ENCODE measurements at regions of chr3 and their contacts with region 1.

Region 1: DNA sequence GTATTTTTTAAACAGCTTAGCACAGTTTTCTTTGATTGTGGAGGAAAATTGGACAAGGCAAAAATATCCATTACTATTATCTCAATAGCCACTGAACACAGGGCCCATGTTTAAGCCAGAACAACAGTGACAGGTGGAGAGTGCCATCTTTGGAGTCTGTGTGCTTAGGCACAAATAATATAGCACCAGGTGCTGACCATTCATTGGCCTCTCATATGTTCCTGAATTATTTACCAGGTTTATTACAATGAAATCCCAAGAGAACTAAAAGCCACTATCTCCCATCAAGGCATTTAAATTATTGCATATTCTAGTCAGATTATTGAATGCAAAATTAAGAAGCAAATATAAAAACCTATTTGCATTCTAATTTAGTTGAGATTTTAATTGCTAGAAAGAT is 39.6 kb downstream of the GPR156 start:
- DNase-seq: no peak
- ATAC-seq: no peak
- H3K4me3 ChIP-seq: no peak overlapping the region
- H3K27ac ChIP-seq: no peak overlapping the region
- H3K4me1 ChIP-seq: no peaks in the 10 kb centered on the region
- CTCF ChIP-seq: no peak
- EP300 ChIP-seq: no peak
- POLR2A ChIP-seq: no peak
- RAD21 ChIP-seq: no peak

Region 2: DNA sequence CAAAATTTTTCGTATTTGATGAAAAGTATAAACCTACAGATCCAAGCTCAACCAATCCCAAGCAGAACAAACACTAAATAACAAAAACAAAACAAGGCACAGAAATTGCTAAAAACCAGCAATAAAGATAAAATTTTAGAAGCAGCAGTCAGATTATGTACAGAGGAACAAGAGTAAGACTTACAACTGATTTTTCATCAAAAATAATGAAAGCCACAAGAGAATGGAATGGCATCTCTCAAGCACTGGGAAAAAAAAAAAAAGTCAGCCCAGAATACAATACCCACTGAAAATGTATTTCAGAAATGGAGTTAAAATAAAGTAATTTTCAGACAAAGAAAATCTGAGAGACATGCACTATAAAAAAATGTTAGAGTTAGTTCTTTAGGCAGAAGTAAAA is 12.6 kb after region 1 on chr3:
- CTCF ChIA-PET with region 1: interaction called, 15 read pairs
- POLR2A ChIA-PET with region 1: no interaction called
- DNase-seq: no peak
- ATAC-seq: no peak
- H3K4me3 ChIP-seq: no peak overlapping the region
- H3K27ac ChIP-seq: no peak overlapping the region
- H3K4me1 ChIP-seq: no peaks in the 10 kb centered on the region
- CTCF ChIP-seq: no peak
- EP300 ChIP-seq: no peak
- POLR2A ChIP-seq: no peak
- RAD21 ChIP-seq: no peak

Region 3: GRCh38 chr3:120311863-120312794 is 66.7 kb after region 1 on chr3:
- CTCF ChIA-PET with region 1: no interaction called
- POLR2A ChIA-PET with region 1: no interaction called
- DNase-seq: no peak
- ATAC-seq: no peak
- H3K4me3 ChIP-seq: no peak overlapping the region
- H3K27ac ChIP-seq: no peak overlapping the region
- H3K4me1 ChIP-seq: no peaks in the 10 kb centered on the region
- CTCF ChIP-seq: no peak
- EP300 ChIP-seq: no peak
- POLR2A ChIP-seq: no peak
- RAD21 ChIP-seq: no peak

Region 4: DNA sequence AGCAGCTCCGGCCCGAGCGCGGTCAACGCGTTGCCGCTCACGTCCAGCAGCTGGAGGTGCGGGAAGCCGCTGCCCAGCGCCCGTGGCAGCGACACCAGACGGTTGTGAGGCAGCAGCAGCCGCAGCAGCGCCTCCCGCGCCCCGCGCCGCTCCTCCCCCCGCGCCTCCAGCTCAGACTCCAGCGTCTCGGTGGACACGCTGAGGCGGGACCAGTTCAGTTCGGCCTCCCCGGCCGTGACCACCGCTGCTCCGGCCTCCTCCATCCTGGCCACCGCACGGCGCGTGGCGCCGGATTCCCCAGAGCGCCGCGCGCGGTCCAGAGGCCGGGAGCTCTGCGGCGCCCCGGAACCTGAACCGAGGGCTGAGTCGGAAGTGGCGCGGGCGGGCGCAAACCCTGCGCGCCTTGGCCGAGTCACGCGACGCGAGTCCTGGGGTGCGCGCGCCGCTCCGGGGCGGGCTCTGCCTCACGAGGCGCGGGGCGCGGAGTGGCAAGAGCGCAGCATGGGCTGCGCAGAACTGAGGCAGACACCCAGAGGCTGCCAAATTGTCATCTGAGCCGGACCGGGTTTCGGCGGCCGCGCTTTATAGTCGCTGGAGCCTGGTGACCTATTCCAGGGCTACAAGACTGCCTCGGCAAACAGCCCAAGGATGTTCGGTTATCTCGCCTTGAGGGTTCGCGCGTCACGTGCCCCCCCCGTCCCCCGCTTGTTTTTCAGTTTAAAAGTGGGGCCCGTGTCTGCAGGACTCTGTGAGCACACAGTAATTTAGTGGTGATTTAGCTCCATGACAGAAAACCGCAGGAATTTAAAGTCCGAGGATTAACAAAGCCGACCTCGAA is 103.8 kb after region 1 on chr3 and contains the start of gene LRRC58:
- CTCF ChIA-PET with region 1: interaction called, 10 read pairs
- POLR2A ChIA-PET with region 1: interaction called, 6 read pairs
- DNase-seq: peak; percentile 82 to 95
- ATAC-seq: peak; percentile 91 to 94
- H3K4me3 ChIP-seq: peak within 1 kb of the TSS; percentile 70
- H3K27ac ChIP-seq: peak within 1 kb of the TSS; percentile 91 to 95
- H3K4me1 ChIP-seq: peaks cover 41% of the 10 kb centered on the region
- CTCF ChIP-seq: peak; percentile 35; the same call in 2 of the 3 replicates
- EP300 ChIP-seq: peak in 1 of 2 experiments; percentile 33; a peak in 1 of 5 replicates
- POLR2A ChIP-seq: peak; percentile 80
- RAD21 ChIP-seq: 0 out of 5 replicates have a peak, but pooled peaks of 1 of the 2 experiments have one; percentile 24
- polyA plus RNA-seq, gene LRRC58: 24.1 and 29.9 TPM in 2 replicates

Region 5: DNA sequence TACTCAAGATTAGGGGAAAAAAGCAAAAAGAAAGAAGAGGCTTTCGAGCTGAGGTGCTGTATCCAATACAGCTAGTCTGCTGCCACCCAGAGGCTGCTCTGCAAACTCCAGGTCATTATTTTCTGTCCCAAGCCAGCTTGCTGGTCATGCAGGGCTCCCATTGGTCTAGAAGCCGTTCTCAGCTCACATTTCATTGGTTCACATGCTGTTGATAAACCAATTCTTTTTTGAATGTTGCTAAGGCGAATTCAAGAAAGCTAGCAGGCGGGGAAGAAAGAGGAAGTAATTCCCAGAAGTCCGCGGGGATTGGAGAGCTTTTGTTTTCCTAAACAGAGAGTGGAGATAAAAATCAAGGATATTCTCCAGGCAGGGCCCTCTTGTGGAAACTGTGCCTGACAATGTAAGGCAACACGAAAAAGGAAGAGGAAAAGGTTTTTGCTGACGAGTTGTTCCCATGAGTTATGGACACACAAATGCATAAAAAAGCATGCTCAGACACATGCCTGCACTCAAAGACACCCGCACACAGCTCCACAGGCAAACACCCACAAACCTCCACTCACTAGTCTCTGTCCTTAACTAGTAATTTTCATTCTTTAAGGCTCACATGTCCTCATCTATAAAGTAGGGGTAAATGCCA is 172.0 kb after region 1 on chr3:
- CTCF ChIA-PET with region 1: interaction called, 121 read pairs
- POLR2A ChIA-PET with region 1: interaction called, 10 read pairs
- DNase-seq: peak; percentile 97 to 99
- ATAC-seq: peak; percentile 92 to 98
- H3K4me3 ChIP-seq: peak overlapping the region; percentile 30
- H3K27ac ChIP-seq: peak overlapping the region; percentile 69 to 78
- H3K4me1 ChIP-seq: peaks cover 22% of the 10 kb centered on the region
- CTCF ChIP-seq: peak; percentile 95
- EP300 ChIP-seq: no peak
- POLR2A ChIP-seq: no peak
- RAD21 ChIP-seq: peak; percentile 86 to 87

Region 6: DNA sequence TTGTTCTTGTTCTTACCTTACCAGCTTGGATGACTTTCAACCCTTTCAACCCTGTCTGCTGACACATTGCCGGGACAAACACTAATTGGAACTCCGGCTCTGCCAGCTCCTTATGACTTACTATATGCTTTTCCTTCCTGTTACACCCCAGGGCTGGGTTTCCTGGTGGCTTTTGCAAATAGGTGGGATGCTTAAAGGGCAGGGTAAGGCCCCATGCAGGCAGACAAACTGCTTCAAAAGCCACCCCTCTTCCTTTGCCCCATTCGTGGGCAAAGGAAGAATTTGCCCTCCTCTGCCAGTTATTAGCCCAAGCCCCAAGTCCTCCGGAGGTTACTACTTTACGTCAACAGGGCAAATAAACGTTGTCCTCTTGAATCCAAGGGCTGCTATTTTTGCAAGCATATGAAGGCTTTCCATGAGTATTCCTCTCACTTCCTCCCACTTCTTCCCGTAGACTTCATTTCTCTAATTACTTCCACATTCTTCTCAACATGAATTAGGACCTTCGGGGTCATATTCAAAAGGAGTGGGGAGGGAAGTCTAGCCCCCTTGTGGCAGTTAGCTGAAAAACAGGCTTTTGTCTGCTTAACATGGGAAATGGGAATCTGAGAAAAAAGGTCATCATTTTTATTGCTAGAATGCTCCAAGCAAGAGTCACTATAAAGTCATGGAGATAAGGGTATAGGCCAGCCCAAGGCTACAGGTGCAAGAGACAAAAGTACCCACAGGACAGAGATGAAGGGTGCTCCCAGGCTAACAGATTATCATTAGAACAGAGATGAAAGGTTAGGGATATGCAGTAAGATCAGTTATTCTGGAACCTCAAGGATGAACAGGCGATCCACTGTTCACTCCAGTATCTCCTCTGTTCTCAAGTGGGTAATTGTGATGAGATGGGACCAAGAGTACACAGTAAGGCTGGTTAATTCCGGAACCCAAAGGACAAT is 261.7 kb after region 1 on chr3:
- CTCF ChIA-PET with region 1: interaction called, 10 read pairs
- POLR2A ChIA-PET with region 1: no interaction called
- DNase-seq: peak; percentile 40 to 46
- ATAC-seq: peak; percentile 54 to 83; a peak in 4 of 6 replicates
- H3K4me3 ChIP-seq: no peak overlapping the region
- H3K27ac ChIP-seq: no peak overlapping the region
- H3K4me1 ChIP-seq: no peaks in the 10 kb centered on the region
- CTCF ChIP-seq: peak; percentile 61
- EP300 ChIP-seq: no peak
- POLR2A ChIP-seq: no peak
- RAD21 ChIP-seq: peak; percentile 51 to 56

Region 7: DNA sequence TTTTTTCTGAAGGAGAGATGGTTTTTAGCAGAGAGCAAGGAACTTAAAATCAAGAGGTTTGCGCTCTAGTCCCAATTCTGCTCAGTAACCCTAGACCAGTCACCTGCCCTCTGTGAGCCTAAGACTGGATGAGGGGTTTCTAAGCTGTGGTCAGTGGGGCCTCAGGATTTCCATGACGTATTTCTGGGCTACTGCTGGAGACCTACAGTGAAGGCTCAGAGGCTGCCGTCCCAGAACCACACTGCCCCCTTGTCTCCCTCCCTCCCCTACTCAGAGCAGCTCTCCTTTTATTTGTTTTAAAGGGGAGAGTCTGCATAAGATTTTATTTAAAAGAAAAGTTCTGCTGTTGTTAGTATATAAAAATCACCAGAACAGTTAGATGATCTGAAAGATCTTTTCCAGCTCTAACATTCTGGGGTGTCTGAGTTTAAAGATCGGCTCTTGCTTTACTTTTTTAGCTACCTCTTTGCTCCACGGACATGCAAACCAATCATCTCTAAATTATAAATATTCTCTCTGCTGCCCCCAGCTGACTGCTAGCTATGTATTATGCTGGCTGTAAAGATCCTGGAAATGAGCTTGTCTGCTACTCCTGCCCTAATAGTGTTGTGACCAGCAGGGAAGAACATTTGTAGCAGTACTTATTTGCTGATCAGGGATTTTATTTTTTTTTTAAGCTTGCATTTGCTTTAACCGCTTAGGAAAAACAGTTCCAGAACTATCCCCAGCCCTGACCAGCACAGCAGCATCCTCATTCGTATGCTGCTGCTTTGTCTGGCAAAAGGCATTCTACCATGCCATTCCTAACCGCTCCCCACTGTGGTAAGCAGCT is 322.2 kb after region 1 on chr3:
- CTCF ChIA-PET with region 1: interaction called, 15 read pairs
- POLR2A ChIA-PET with region 1: no interaction called
- DNase-seq: peak in 1 of 2 experiments; percentile 45
- ATAC-seq: peak; percentile 95 to 96
- H3K4me3 ChIP-seq: peak overlapping the region; percentile 28; the same call in 2 of the 3 replicates
- H3K27ac ChIP-seq: peak overlapping the region in 1 of 2 experiments; percentile 45; a peak in 2 of 6 replicates
- H3K4me1 ChIP-seq: peaks cover 4% of the 10 kb centered on the region; the same call in 2 of the 3 replicates
- CTCF ChIP-seq: peak; percentile 58
- EP300 ChIP-seq: no peak
- POLR2A ChIP-seq: no peak
- RAD21 ChIP-seq: peak; percentile 15 to 21; a peak in 1 of 5 replicates

Measured in A549 (cell line).